ENCODE measurements at regions of chr15 and their contacts with region 1.

Region 1: DNA sequence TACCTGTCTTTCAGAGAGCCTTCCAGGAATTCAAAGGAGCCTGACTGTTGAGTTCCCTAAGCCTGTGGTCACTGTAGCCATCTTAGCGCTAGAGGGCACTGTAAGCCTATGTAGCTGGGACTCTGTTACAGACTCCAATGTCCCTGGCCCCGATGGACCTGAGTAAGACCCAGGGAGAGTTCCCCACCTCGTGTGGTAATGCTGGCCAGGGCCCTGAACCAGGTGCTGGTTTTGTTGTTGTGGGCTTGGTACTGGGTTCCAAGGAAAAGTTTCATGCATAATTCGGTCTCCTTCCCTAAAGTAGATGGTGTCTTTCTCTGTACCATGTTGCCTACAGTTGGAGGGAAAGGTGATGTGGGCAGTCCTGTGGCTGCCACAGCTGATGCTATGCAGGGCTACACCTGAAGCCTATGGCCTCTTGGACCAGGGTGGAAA is 32.4 kb downstream of the CDAN1 start:
- DNase-seq: no peak
- H3K4me3 ChIP-seq: no peak overlapping the region
- CTCF ChIP-seq: peak; percentile 89

Region 2: GRCh38 chr15:42528970-42529369 is 175.5 kb before region 1 on chr15:
- CTCF ChIA-PET with region 1: no interaction called
- POLR2A ChIA-PET with region 1: no interaction called
- DNase-seq: no peak
- H3K4me3 ChIP-seq: no peak overlapping the region
- CTCF ChIP-seq: no peak

Region 3: DNA sequence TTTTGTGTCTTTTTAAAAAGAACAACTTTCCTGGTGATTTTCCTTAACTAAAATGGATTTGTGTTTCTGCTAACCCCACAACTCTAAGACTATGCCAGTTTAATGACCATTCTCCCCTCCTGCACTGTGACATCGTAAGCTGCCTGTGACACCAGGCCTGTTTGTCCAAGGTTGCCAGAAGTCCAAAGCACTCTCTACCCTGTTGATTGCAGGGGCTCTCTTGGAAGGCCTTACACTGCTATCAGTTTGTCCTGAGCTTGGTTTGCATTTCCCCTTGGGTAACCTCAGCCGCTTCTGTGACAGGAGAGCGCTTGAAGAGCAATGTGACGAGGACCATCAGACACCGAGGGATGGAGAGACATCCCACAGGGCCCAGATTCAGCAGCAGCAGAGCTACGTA is 23.4 kb before region 1 on chr15:
- CTCF ChIA-PET with region 1: interaction called, 10 read pairs
- POLR2A ChIA-PET with region 1: no interaction called
- DNase-seq: no peak
- H3K4me3 ChIP-seq: no peak overlapping the region
- CTCF ChIP-seq: no peak

Region 4: DNA sequence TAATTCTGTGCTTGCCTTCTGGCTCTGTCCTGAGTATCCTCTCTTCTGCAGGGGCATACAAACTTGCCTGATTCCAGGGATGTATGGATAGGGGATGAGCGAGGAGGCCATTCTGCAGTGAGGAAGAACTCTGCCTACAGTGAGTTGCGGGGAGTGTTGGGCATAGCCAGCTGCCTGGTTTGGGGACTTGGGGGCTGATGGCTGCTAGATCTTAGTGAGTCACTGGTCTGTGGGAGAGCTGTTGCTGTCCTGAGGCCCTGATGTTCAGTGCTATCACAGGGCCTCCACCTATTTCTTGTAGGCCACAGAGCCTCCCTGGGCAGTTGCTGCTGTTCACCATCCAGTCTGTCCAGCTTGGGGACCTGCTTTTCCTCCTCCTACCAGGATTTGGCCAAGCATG is 12.1 kb after region 1 on chr15:
- CTCF ChIA-PET with region 1: interaction called, 38 read pairs
- POLR2A ChIA-PET with region 1: no interaction called
- DNase-seq: no peak
- H3K4me3 ChIP-seq: no peak overlapping the region
- CTCF ChIP-seq: no peak